Lower lobe of right lung (tissue), 2 donors: ENCODE measurements at regions of chr18 and their contacts with region 1.

Region 1: GRCh38 chr18:63320046-63320689 is 599 bp upstream of the BCL2 start:
- DNase-seq: peak; percentile 85
- ATAC-seq: peak; percentile 74 to 83
- H3K4me3 ChIP-seq: peak overlapping the region; percentile 73
- H3K27ac ChIP-seq: peak overlapping the region; percentile 47
- H3K4me1 ChIP-seq: peaks cover 20% of the 10 kb centered on the region
- H3K27me3 ChIP-seq: no peaks in the 10 kb centered on the region
- CTCF ChIP-seq: no peak

Region 2: DNA sequence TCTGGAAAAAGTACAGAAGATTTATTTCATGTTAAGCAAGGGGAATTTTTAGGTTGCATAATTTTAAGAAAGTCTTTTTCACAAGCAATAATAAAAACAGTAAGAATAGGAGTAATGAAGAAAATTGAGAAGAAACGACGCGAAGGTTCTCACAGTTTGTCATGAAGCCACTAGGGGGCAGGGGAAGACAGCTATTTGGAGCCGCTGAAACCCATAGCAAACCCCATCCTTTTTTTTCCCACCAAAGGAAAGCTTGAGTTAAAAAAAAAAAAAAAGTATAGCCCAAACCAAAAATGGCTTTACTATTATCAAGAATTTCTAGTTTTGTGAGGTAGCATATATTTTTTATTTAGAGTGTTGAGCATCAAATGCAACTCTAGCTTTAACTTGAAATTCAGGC is 303.9 kb before region 1 on chr18:
- intact Hi-C with region 1: loop called (anchors 10 kb)
- DNase-seq: no peak
- ATAC-seq: peak; percentile 68 to 70
- H3K4me3 ChIP-seq: no peak overlapping the region
- H3K27ac ChIP-seq: no peak overlapping the region
- H3K4me1 ChIP-seq: no peaks in the 10 kb centered on the region
- H3K27me3 ChIP-seq: peaks cover 9% of the 10 kb centered on the region
- CTCF ChIP-seq: peak; percentile 74

Region 3: GRCh38 chr18:63131106-63131958 is 188.8 kb before region 1 on chr18:
- intact Hi-C with region 1: loop called (anchors 10 kb)
- DNase-seq: no peak
- ATAC-seq: peak; percentile 54 to 62
- H3K4me3 ChIP-seq: no peak overlapping the region
- H3K27ac ChIP-seq: no peak overlapping the region
- H3K4me1 ChIP-seq: peaks cover 9% of the 10 kb centered on the region
- H3K27me3 ChIP-seq: no peaks in the 10 kb centered on the region
- CTCF ChIP-seq: peak; percentile 71

Region 4: GRCh38 chr18:63249771-63250170 is 70.4 kb before region 1 on chr18:
- intact Hi-C with region 1: loop called (anchors 10 kb)
- DNase-seq: peak; percentile 53
- ATAC-seq: peak; percentile 44 to 67
- H3K4me3 ChIP-seq: no peak overlapping the region
- H3K27ac ChIP-seq: peak overlapping the region; percentile 36
- H3K4me1 ChIP-seq: peaks cover 15% of the 10 kb centered on the region
- H3K27me3 ChIP-seq: no peaks in the 10 kb centered on the region
- CTCF ChIP-seq: no peak